Left cardiac atrium (tissue), 4 donors: ENCODE measurements at regions of chr5 and their contacts with region 1.

Region 1: DNA sequence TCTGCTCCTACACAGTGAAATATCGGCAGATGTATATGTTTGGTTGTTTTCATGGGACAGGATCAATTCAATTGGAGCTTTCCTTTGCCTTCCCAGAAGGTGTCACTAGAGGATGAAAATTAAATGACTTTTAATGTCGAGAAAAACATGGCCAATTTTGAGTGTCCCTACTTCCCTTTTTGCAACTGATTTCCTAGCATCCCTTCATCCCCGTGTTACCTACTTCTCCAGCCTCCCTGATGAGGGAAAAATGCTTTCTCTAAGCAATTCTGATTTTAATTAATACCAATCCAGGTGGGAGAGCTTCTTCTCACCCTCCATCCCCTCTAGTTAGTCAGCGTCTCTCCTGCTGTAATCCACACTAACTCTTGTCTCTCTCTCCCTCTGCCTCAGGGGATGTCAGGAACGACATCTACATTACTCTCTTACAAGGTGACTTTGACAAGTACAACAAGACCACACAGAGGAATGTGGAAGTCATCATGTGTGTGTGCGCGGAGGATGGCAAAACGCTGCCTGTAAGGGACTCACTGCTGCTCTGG is 64.9 kb downstream of the DOCK2 start:
- DNase-seq: no peak
- ATAC-seq: peak; percentile 14 to 53

Region 2: GRCh38 chr5:169850409-169850808 is 148.4 kb after region 1 on chr5:
- intact Hi-C with region 1: no loop called
- DNase-seq: no peak
- ATAC-seq: no peak

Region 3: GRCh38 chr5:169980418-169981053 is 278.6 kb after region 1 on chr5 and contains the start of gene INSYN2B:
- intact Hi-C with region 1: loop called (anchors 2 to 5 kb)
- DNase-seq: peak; percentile 50
- ATAC-seq: peak; percentile 88 to 93
- total RNA-seq, gene INSYN2B: 0.29 to 1.1 TPM

Region 4: DNA sequence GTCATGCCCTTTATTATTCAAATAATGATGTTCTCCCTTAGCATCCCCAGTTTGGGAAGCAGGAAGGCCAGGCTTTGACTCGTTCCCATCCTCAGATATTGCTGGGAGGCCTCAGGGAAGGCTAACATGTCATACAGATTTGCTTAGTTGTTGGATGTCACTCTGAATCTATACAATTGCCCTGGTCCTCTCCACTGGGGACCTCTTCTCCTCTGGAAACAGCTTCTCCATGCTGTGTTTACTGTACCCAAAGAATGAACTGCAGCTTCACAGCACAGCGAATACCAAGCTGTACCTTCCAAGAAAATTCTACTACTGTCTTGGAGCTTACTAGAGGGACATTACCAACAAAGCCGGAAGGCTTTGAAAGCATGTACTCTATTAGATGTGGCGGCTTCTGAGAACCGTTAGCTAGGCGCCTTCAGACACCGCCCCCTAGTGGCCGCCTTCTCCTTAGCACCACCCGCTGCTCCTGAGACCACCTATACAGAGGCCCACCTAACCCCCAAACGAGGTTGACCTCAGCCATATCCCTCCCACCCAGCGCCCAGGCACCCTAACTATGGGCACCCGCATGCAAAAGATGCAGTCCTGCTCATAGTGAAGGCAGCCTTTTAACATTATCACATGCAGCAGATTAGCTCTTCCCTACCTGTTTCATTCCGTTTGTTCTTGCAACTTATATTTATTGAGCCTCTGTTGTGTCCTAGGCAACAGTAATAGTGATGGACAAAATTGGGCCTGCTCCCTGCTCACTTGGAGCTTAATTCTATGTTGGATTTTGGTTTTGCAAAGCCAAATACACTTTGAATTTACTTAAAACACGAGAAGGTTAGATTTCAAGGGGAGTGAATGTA is 368.8 kb after region 1 on chr5:
- intact Hi-C with region 1: loop called (anchors 5 to 10 kb)
- DNase-seq: peak; percentile 43
- ATAC-seq: no peak